ENCODE measurements at regions of chr12 and their contacts with region 1.

Region 1: GRCh38 chr12:47963340-47964040 is at the start of gene TMEM106C:
- DNase-seq: peak; percentile 93
- ATAC-seq: peak; percentile 97
- H3K4me3 Mint-ChIP-seq: peak within 1 kb of the TSS; percentile 94
- H3K27ac Mint-ChIP-seq: peak within 1 kb of the TSS; percentile 83
- H3K4me1 Mint-ChIP-seq: peaks cover 33% of the 10 kb centered on the region
- H3K27me3 Mint-ChIP-seq: peaks cover 38% of the 10 kb centered on the region
- total RNA-seq, gene TMEM106C: 162 to 174 TPM

Region 2: DNA sequence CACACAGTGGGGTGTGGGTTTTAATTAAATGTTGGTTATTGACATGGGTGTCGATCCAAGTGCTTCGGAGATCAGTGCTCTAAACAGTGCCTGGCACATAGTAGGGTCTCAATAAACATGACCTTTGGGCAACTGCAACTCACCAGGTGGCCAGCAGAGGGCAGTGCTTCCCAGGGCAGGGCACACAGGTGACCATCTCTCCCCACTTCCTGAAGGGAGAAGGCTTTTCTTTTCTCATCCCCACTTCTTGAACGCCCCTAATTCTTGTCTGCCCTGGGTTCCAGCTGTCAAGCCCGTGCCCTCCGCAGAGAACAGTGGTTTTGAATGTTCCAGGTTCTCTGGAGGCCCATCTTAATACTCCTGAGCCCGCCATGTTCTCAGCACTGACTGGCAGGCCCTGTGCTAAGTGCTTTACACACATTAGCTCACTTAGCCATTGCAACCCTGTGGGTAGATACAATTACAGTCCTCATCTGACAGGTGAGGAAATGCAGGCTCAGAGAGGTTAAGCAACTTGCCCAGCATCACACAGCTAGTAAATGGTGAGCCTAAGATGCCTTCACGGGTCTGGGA is 221.2 kb before region 1 on chr12:
- CTCF ChIA-PET with region 1: interaction called, 16 read pairs
- DNase-seq: peak; percentile 85
- ATAC-seq: peak; percentile 69
- H3K4me3 Mint-ChIP-seq: no peak overlapping the region
- H3K27ac Mint-ChIP-seq: peak overlapping the region; percentile 35
- H3K4me1 Mint-ChIP-seq: peaks cover 14% of the 10 kb centered on the region
- H3K27me3 Mint-ChIP-seq: peaks cover 26% of the 10 kb centered on the region

Region 3: GRCh38 chr12:47904713-47905310 is 58.7 kb before region 1 on chr12 and contains the start of gene VDR:
- CTCF ChIA-PET with region 1: interaction called, 30 read pairs
- DNase-seq: peak; percentile 85
- ATAC-seq: peak; percentile 78
- H3K4me3 Mint-ChIP-seq: peak within 1 kb of the TSS; percentile 85
- H3K27ac Mint-ChIP-seq: peak within 1 kb of the TSS; percentile 86
- H3K4me1 Mint-ChIP-seq: peaks cover 43% of the 10 kb centered on the region
- H3K27me3 Mint-ChIP-seq: peaks cover 34% of the 10 kb centered on the region
- total RNA-seq, gene VDR: 34.9 to 69.8 TPM

Region 4: DNA sequence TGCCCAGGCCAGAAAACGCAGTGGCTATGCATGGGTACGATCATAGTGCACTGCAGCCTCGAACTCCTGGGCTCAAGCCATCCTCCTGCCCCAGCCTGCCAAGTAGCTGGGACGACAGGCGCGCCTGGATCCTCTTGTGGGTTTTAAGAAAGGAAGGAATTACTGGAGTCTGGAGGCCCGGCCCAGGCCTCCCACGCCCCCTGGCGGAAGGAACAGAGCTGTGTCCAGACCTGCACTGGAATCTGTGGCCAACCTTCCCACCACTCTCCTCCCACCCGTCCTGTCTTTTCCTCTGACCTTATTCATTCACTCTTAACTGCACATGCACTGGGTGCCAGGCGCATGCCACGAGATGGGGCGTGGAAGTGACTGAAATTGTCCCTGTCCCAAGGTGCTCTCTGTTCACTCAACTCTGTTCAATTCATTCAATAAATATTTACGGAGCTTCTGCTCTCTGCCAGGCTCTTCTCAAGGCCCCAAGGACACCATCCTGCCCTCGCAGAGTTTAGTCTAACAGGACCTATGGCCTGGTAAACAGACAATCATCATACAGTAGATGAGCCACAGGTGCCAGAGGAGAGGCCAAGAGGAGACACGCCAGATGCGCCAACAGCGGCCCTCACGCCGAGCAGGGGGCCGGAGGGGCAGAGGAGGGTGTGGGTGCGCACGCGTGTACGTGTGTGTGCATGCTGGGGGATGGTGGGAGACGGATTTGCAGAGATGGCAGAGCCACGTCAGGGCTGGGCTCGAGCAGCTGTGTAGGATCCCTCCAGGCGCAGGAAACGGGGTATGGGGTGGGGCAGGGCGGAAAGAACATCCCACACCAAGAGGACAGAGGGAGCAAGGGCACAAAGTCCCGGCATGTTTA is 13.8 kb before region 1 on chr12:
- CTCF ChIA-PET with region 1: interaction called, 25 read pairs
- DNase-seq: peak; percentile 60
- ATAC-seq: peak; percentile 76
- H3K4me3 Mint-ChIP-seq: no peak overlapping the region
- H3K27ac Mint-ChIP-seq: no peak overlapping the region
- H3K4me1 Mint-ChIP-seq: peaks cover 14% of the 10 kb centered on the region
- H3K27me3 Mint-ChIP-seq: peaks cover 8% of the 10 kb centered on the region

Region 5: GRCh38 chr12:47990351-47991105 is 27.0 kb after region 1 on chr12:
- CTCF ChIA-PET with region 1: interaction called, 24 read pairs
- DNase-seq: peak; percentile 93
- ATAC-seq: peak; percentile 90
- H3K4me3 Mint-ChIP-seq: peak overlapping the region; percentile 16
- H3K27ac Mint-ChIP-seq: peak overlapping the region; percentile 86
- H3K4me1 Mint-ChIP-seq: peaks cover 26% of the 10 kb centered on the region
- H3K27me3 Mint-ChIP-seq: peaks cover 68% of the 10 kb centered on the region

Region 6: DNA sequence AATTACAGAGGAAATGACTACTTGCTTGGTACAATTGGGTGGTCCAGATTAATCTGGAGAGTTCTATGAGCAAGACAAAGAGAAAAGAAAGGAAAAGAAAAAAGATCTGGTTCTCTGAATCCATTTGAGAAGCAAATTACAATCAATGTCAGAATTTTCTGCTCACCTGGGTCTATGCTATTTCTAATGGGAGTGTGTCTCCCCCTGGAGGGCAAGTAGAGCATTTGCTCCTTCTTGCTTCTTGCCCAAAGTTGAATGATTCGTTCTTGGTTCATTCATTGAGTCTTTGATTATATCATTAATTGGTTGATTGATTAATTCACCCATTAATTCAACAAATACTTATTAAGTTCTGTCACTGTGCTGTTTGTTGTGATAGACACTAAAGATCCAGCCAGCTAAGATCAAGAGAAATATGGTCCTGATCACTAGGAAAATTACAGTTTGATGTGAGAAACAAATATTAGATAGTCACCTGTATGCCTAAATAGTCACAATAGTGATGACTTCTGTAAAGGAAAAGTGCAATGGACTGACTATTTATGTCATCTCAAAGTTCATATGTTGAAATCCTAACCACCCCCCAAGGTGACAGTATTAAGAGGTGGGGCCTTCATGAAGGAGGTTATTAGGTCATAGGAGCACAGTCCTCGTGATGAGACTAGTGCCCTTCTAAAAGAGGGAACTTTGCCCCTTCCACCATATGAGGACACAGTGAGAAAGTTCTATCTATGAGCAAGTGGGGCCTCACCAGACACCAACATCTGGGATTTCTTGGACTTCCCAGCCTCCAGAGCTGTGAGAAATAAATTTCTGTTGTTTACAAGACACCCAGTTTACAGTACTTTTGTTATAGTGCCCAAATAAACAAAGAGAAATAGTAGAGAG is 201.8 kb after region 1 on chr12:
- CTCF ChIA-PET with region 1: interaction called, 10 read pairs
- DNase-seq: peak; percentile 61
- ATAC-seq: peak; percentile 81
- H3K4me3 Mint-ChIP-seq: no peak overlapping the region
- H3K27ac Mint-ChIP-seq: no peak overlapping the region
- H3K4me1 Mint-ChIP-seq: peaks cover 1% of the 10 kb centered on the region
- H3K27me3 Mint-ChIP-seq: peaks cover 14% of the 10 kb centered on the region

Region 7: GRCh38 chr12:48422060-48422459 is 458.6 kb after region 1 on chr12:
- CTCF ChIA-PET with region 1: no interaction called
- DNase-seq: no peak
- ATAC-seq: no peak
- H3K4me3 Mint-ChIP-seq: no peak overlapping the region
- H3K27ac Mint-ChIP-seq: no peak overlapping the region
- H3K4me1 Mint-ChIP-seq: peaks cover 2% of the 10 kb centered on the region
- H3K27me3 Mint-ChIP-seq: peaks cover 3% of the 10 kb centered on the region